ENCODE measurements at regions of chr16 and their contacts with region 1.

Region 1: DNA sequence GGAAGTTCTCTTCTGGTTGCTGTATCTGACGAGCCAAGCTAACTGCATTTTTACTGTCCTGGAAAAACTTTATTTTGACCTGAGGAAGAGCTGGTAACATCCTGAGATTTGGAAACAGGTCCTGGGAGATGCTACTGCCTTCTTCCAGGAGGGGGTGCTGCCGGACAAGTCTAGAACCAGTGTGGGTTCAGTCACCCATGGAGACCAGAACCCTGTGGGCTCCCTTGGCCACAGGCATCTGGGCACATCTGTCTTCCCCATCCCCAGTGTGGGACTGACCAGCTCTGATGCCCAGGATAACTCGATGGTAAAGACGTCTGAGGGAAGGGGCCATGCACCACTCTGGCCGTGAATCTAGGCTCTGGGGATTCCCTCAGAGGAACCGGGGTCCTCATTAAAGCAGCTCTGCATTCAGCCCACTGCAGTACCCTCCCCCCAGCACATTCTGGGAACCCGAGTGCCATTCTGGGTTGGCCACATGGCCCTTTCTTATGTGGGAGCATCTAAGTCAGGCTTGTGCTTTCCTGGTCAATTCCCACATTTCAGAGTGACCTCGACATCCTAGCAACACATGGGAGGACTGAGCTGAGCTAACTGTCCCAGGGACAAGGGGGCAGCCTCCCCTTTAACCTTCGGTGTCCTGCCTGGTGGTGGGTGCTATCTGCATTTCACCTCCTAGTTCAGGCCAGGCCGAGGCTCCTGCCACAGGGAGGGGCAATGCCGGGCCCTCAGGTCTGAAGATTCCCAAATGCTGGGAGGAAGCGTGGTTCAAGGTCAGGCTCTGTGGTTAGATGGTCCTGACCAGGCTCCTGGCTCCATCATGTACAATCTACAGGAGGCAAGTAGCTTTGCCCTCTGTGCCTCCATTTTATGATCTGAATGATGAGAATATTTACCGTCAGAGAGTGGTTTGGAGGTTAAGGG is 6.4 kb downstream of the C16orf86 start:
- DNase-seq: peak in 1 of 2 experiments; percentile 87
- H3K4me3 ChIP-seq: no peak overlapping the region
- H3K27ac ChIP-seq: no peak overlapping the region
- H3K4me1 ChIP-seq: peaks cover 0 to 5% (median 2%) of the 10 kb centered on the region in 4 experiments; a peak in 3 of 7 replicates
- H3K27me3 ChIP-seq: no peaks in the 10 kb centered on the region; a peak in 1 of 7 replicates
- CTCF ChIP-seq: peak; percentile 76 to 90 (median 89)
- EP300 ChIP-seq: no peak
- POLR2A ChIP-seq: no peak
- RAD21 ChIP-seq: peak; percentile 92 to 94

Region 2: GRCh38 chr16:67660564-67661028 is 12.4 kb before region 1 on chr16 and contains the start of gene PARD6A:
- CTCF ChIA-PET with region 1: interaction called, 46 read pairs
- POLR2A ChIA-PET with region 1: interaction called, 7 read pairs
- DNase-seq: peak; percentile 93 to 94
- H3K4me3 ChIP-seq: peak within 1 kb of the TSS; percentile 86 to 98 (median 89)
- H3K27ac ChIP-seq: peak within 1 kb of the TSS; percentile 81
- H3K4me1 ChIP-seq: peaks cover 0 to 18% (median 10%) of the 10 kb centered on the region in 4 experiments; a peak in 5 of 7 replicates
- H3K27me3 ChIP-seq: peaks cover 0 to 2% (median 0%) of the 10 kb centered on the region in 4 experiments; a peak in 1 of 7 replicates
- CTCF ChIP-seq: 0 out of 4 replicates have a peak, but pooled peaks of 1 of the 3 experiments have one; percentile 5
- EP300 ChIP-seq: no peak
- POLR2A ChIP-seq: peak in 1 of 2 experiments; percentile 16; a peak in 1 of 3 replicates
- RAD21 ChIP-seq: no peak
- total RNA-seq, gene PARD6A: 14.4 and 15.1 TPM in 2 replicates

Region 3: DNA sequence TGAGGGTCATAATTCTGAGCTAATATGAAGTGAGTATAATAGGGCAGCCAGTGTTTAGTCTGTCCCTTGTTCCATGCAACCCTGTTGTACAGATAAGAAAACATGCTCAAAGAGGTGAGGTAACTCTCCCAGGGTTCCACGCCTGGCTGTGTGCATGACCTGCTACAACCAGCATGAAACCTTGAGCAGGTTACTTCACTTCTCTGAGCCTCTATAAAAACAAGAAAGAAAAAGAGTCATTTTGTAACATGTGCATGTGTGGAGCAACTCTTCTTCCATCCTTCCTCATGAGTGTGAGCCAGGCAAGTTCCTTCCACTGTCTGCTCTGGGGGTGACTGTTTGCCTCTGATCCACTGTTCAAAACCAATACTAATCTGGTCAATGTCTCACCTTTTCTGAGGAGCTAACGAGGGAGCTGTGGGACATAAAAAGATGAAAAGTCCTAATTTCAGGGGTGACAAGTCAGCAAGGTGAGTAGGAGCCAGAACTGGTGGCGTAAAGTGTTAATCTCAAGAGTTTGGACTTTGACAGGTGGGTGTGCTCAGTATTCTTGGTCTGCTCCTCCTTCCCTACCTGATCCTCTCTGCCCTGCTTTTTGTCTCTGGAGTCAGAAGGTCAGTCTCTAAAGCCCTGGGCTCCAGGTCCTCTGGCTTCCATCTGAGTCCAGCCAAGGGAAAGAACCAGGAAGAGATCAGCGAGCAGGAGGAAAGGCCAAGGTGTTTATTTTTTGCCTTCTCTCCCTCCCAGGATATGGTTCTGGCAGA is 24.6 kb after region 1 on chr16:
- CTCF ChIA-PET with region 1: interaction called, 15 read pairs
- POLR2A ChIA-PET with region 1: no interaction called
- DNase-seq: no peak
- H3K4me3 ChIP-seq: no peak overlapping the region
- H3K27ac ChIP-seq: no peak overlapping the region
- H3K4me1 ChIP-seq: peaks cover 0 to 3% (median 2%) of the 10 kb centered on the region in 4 experiments; a peak in 1 of 7 replicates
- H3K27me3 ChIP-seq: no peaks in the 10 kb centered on the region
- CTCF ChIP-seq: no peak
- EP300 ChIP-seq: no peak
- POLR2A ChIP-seq: no peak
- RAD21 ChIP-seq: no peak

Region 4: DNA sequence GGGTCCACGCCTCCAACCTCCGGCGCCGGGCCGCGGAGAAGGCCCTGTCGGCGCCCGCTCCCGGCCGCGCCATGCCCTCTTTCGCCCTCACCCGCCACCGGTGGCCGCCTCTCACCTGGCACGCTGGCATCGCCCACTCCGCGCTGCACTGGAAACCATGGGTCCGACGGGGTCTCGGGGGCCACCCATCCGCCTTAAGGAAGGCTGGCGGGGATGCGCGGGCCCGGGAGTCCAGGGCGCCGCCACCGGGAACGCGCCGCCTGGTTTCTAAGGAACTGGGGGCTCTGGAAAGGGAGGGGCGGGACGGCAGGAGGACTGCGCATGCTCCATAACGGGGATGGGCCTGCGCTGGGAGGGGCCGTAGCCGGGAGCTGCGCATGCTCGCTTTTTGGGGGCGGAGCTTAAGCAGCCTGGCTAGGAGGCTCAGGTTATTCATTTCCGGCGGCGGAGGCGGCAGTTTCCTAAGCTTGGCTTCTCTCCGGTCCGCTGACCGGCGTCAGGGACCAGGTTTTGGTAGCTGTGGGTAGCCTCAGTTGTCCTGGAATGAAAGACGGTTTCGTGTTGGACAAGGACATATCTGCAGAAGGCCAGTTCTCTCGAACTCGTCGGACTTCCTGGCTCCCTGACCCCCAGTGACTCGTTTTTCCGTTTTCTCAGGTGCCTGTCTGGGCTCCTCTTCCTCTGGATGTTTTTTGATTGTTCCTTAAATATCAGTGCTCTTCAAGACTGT is 46.2 kb after region 1 on chr16 and contains the start of gene GFOD2:
- CTCF ChIA-PET with region 1: interaction called, 34 read pairs
- POLR2A ChIA-PET with region 1: interaction called, 7 read pairs
- DNase-seq: peak; percentile 89 to 100
- H3K4me3 ChIP-seq: peak within 1 kb of the TSS; percentile 84 to 91 (median 90)
- H3K27ac ChIP-seq: 0 out of 2 replicates have a peak within 1 kb of the TSS, but pooled peaks have one; percentile 6
- H3K4me1 ChIP-seq: peaks cover 0 to 10% (median 5%) of the 10 kb centered on the region in 4 experiments; a peak in 4 of 7 replicates
- H3K27me3 ChIP-seq: no peaks in the 10 kb centered on the region; a peak in 1 of 7 replicates
- CTCF ChIP-seq: peak in 1 of 3 experiments; percentile 6; a peak in 1 of 4 replicates
- EP300 ChIP-seq: no peak
- POLR2A ChIP-seq: peak in 1 of 2 experiments; percentile 68; a peak in 2 of 3 replicates
- RAD21 ChIP-seq: no peak
- total RNA-seq, gene GFOD2: 33.2 and 35.4 TPM in 2 replicates

Region 5: GRCh38 chr16:67822511-67822910 is 149.5 kb after region 1 on chr16:
- CTCF ChIA-PET with region 1: interaction called, 11 read pairs
- POLR2A ChIA-PET with region 1: interaction called, 3 read pairs
- DNase-seq: no peak
- H3K4me3 ChIP-seq: no peak overlapping the region
- H3K27ac ChIP-seq: no peak overlapping the region
- H3K4me1 ChIP-seq: peaks cover 0 to 2% (median 0%) of the 10 kb centered on the region in 4 experiments; a peak in 3 of 7 replicates
- H3K27me3 ChIP-seq: no peaks in the 10 kb centered on the region; a peak in 1 of 7 replicates
- CTCF ChIP-seq: no peak
- EP300 ChIP-seq: no peak
- POLR2A ChIP-seq: no peak
- RAD21 ChIP-seq: no peak

Region 6: GRCh38 chr16:67872786-67873537 is 200.0 kb after region 1 on chr16 and contains the start of gene EDC4:
- CTCF ChIA-PET with region 1: interaction called, 13 read pairs
- POLR2A ChIA-PET with region 1: no interaction called
- DNase-seq: peak in 1 of 2 experiments; percentile 92
- H3K4me3 ChIP-seq: peak within 1 kb of the TSS; percentile 85 to 97 (median 93)
- H3K27ac ChIP-seq: peak within 1 kb of the TSS; percentile 53
- H3K4me1 ChIP-seq: peaks cover 0 to 7% (median 3%) of the 10 kb centered on the region in 4 experiments; a peak in 3 of 7 replicates
- H3K27me3 ChIP-seq: no peaks in the 10 kb centered on the region
- CTCF ChIP-seq: no peak; a peak in 1 of 4 replicates
- EP300 ChIP-seq: no peak; a peak in 1 of 3 replicates
- POLR2A ChIP-seq: peak in 1 of 2 experiments; percentile 74; a peak in 2 of 3 replicates
- RAD21 ChIP-seq: peak in 1 of 2 experiments; percentile 2; a peak in 1 of 4 replicates
- total RNA-seq, gene EDC4: 72.7 and 73.4 TPM in 2 replicates

Region 7: DNA sequence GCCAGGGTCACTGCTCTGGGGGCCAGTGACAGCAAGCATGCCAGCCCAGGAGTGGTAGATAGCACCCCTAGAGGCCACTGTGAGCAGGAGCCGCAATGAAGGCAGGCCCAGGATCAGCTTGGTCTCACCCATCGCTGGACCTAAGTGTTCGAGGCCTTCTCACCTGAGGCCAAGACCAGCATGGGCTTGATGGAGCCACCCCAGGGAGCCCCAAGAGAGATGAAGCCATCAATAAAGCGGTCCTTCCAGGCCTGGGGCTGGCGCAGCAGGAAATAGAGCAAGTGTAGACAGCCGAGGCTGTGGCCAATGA is 269.2 kb after region 1 on chr16:
- CTCF ChIA-PET with region 1: interaction called, 11 read pairs
- POLR2A ChIA-PET with region 1: interaction called, 3 read pairs
- DNase-seq: peak; percentile 49 to 77
- H3K4me3 ChIP-seq: no peak overlapping the region
- H3K27ac ChIP-seq: no peak overlapping the region
- H3K4me1 ChIP-seq: peaks cover 0 to 2% (median 0%) of the 10 kb centered on the region in 4 experiments; a peak in 3 of 7 replicates
- H3K27me3 ChIP-seq: no peaks in the 10 kb centered on the region
- CTCF ChIP-seq: peak; percentile 84 to 99 (median 96)
- EP300 ChIP-seq: no peak
- POLR2A ChIP-seq: no peak
- RAD21 ChIP-seq: peak; percentile 71 to 80

Region 8: GRCh38 chr16:68116256-68116867 is 443.4 kb after region 1 on chr16:
- CTCF ChIA-PET with region 1: no interaction called
- POLR2A ChIA-PET with region 1: no interaction called
- DNase-seq: no peak
- H3K4me3 ChIP-seq: no peak overlapping the region
- H3K27ac ChIP-seq: no peak overlapping the region
- H3K4me1 ChIP-seq: peaks cover 0 to 5% (median 0%) of the 10 kb centered on the region in 4 experiments; a peak in 1 of 7 replicates
- H3K27me3 ChIP-seq: no peaks in the 10 kb centered on the region
- CTCF ChIP-seq: peak in 2 of 3 experiments; percentile 2 to 42; a peak in 2 of 4 replicates
- EP300 ChIP-seq: no peak
- POLR2A ChIP-seq: no peak
- RAD21 ChIP-seq: peak in 1 of 2 experiments; percentile 7; a peak in 1 of 4 replicates

Measured in H1 (cell line).